Pancreas (tissue), 10 donors: ENCODE measurements at regions of chr1 and their contacts with region 1.

Region 1: GRCh38 chr1:51189421-51190073 is 46.5 kb upstream of the RNF11 start:
- DNase-seq: peak in 3 of 6 donors; percentile 9 to 41 (median 30)
- ATAC-seq: peak; percentile 56 to 89 (median 84)
- H3K4me3 ChIP-seq: no peak overlapping the region
- H3K27ac ChIP-seq: no peak overlapping the region
- H3K4me1 ChIP-seq: no peaks in the 10 kb centered on the region
- H3K27me3 ChIP-seq: no peaks in the 10 kb centered on the region
- CTCF ChIP-seq: peak; percentile 51 to 79 (median 64)

Region 2: GRCh38 chr1:50774759-50775351 is 414.7 kb before region 1 on chr1:
- intact Hi-C with region 1: loop called in 1 of 3 experiments (anchors 10 kb)
- DNase-seq: no peak
- ATAC-seq: peak in 3 of 4 donors; percentile 77 to 82 (median 78)
- H3K4me3 ChIP-seq: no peak overlapping the region
- H3K27ac ChIP-seq: no peak overlapping the region
- H3K4me1 ChIP-seq: no peaks in the 10 kb centered on the region
- H3K27me3 ChIP-seq: no peaks in the 10 kb centered on the region
- CTCF ChIP-seq: peak; percentile 40 to 56 (median 47)

Region 3: GRCh38 chr1:51058858-51059257 is 130.7 kb before region 1 on chr1:
- intact Hi-C with region 1: no loop called
- DNase-seq: no peak
- ATAC-seq: peak in 1 of 4 donors; percentile 42
- H3K4me3 ChIP-seq: no peak overlapping the region
- H3K27ac ChIP-seq: no peak overlapping the region
- H3K4me1 ChIP-seq: no peaks in the 10 kb centered on the region
- H3K27me3 ChIP-seq: no peaks in the 10 kb centered on the region
- CTCF ChIP-seq: no peak